ENCODE measurements at regions of chr9 and their contacts with region 1.

Region 1: GRCh38 chr9:128412120-128412790 is 8.4 kb upstream of the CERCAM start:
- DNase-seq: peak in 7 of 9 donors; percentile 24 to 60 (median 43)
- ATAC-seq: peak; percentile 60
- H3K4me3 ChIP-seq: no peak overlapping the region
- H3K4me3 Mint-ChIP-seq: no peak overlapping the region
- H3K27ac ChIP-seq: no peak overlapping the region
- H3K27ac Mint-ChIP-seq: no peak overlapping the region
- H3K4me1 ChIP-seq: no peaks in the 10 kb centered on the region
- H3K4me1 Mint-ChIP-seq: peaks cover 0 to 4% (median 0%) of the 10 kb centered on the region in 7 donors
- H3K27me3 ChIP-seq: no peaks in the 10 kb centered on the region
- H3K27me3 Mint-ChIP-seq: peaks cover 47 to 61% (median 54%) of the 10 kb centered on the region in 5 donors

Region 2: DNA sequence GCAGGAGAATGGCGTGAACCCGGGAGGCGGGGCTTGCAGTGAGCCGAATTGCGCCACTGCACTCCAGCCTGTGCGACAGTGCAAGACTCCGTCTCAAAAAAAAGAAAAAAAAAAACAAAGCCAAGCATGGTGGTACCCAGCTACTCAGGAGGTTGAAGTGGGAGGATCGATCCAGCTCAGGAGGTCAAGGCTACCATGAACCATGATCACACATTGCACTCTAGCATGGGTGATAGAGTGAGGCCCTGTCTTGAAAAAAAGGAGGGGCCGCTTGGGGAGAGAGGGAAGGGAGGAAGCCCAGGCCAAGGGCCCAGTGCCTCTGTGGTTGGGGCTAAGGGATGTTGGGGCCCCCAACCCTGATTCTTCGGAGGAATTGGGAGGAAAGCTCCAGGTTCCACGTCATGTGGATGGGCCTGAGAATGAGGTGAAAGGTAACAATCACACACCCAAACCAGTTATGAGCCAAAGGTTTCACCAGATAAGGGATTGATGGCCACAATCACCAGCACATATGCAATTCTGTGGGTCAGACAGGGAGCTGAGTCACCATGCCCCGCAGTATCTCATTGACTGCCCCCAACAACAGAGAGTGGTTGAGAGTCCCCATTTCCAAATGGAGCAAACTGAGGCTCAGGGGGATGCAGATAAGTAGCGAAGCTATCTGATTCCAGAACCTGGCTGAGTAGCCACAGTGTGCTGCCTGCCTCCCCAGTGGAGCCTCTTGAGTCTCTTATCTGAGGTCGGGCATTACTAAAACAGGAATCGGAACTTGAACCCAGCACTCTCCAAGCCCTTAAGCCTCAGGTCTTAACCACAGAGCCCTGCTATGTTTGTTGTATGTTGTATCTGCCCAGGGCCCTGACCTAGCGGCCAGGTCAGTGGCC is 115.7 kb before region 1 on chr9:
- CTCF ChIA-PET with region 1: interaction called, 3 read pairs
- POLR2A ChIA-PET with region 1: no interaction called
- intact Hi-C with region 1: loop called in 1 of 2 experiments (anchors 2 kb)
- DNase-seq: no peak
- ATAC-seq: no peak
- H3K4me3 ChIP-seq: no peak overlapping the region
- H3K4me3 Mint-ChIP-seq: no peak overlapping the region
- H3K27ac ChIP-seq: no peak overlapping the region
- H3K27ac Mint-ChIP-seq: no peak overlapping the region
- H3K4me1 ChIP-seq: no peaks in the 10 kb centered on the region
- H3K4me1 Mint-ChIP-seq: peaks cover 0 to 5% (median 4%) of the 10 kb centered on the region in 7 donors
- H3K27me3 ChIP-seq: no peaks in the 10 kb centered on the region
- H3K27me3 Mint-ChIP-seq: no peaks in the 10 kb centered on the region

Region 3: DNA sequence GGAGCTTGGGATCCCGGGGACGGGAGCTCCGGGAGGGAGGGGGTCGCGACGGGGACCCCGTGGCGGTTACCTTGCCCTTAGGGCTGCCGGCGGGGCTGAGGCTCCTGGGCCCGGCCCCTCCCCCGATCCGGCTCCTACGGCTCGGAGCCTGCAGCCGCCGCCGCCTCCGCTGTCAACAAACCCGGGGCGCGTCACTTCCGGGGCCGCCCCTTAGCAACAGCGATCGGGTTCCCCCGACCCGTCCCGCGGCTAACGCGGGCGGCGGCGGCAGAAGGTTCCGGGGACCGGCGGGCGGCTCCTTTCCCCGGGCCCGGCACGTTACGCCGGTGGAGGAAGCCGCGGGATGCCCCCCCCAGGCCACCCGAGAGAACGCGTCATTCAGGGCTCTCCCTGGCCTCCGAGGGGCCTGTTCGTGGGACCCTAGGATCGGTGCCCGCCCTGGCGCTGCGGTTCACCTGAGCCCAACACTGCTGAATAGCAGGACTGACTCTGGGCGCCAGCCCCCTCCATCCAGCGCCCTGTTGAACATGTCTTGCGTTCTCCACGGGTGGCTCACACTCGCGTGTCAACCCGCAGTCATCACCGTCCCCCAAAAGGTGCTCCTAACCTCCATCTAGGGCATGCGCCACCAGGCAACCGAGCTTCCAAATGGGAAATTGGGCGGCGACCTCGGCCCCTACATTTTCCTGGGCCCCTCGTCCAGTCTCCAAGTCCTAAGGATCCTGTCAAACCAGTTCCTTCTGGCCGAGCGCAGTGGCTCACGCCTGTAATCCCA is 359.7 kb after region 1 on chr9 and contains the start of gene ZER1:
- CTCF ChIA-PET with region 1: no interaction called
- POLR2A ChIA-PET with region 1: no interaction called
- intact Hi-C with region 1: no loop called
- DNase-seq: peak; percentile 92 to 98 (median 95)
- ATAC-seq: peak; percentile 97
- H3K4me3 ChIP-seq: peak within 1 kb of the TSS; percentile 97
- H3K4me3 Mint-ChIP-seq: peak within 1 kb of the TSS; percentile 95 to 99 (median 98)
- H3K27ac ChIP-seq: peak within 1 kb of the TSS; percentile 93
- H3K27ac Mint-ChIP-seq: peak within 1 kb of the TSS; percentile 93 to 100 (median 100)
- H3K4me1 ChIP-seq: peaks cover 7 to 12% of the 10 kb centered on the region in 2 donors
- H3K4me1 Mint-ChIP-seq: peaks cover 21 to 40% (median 39%) of the 10 kb centered on the region in 7 donors
- H3K27me3 ChIP-seq: no peaks in the 10 kb centered on the region
- H3K27me3 Mint-ChIP-seq: no peaks in the 10 kb centered on the region
- total RNA-seq, gene ZER1: 22.7 to 51.2 (median 34.7) TPM